ENCODE measurements at regions of chr20 and their contacts with region 1.

Region 1: GRCh38 chr20:36645998-36646397 is at the start of gene SLA2:
- DNase-seq: peak; percentile 83
- H3K4me3 Mint-ChIP-seq: peak within 1 kb of the TSS; percentile 97
- H3K27ac Mint-ChIP-seq: peak within 1 kb of the TSS; percentile 98
- H3K4me1 Mint-ChIP-seq: peaks cover 45% of the 10 kb centered on the region
- H3K27me3 Mint-ChIP-seq: no peaks in the 10 kb centered on the region
- total RNA-seq, gene SLA2: 44.1 TPM

Region 2: DNA sequence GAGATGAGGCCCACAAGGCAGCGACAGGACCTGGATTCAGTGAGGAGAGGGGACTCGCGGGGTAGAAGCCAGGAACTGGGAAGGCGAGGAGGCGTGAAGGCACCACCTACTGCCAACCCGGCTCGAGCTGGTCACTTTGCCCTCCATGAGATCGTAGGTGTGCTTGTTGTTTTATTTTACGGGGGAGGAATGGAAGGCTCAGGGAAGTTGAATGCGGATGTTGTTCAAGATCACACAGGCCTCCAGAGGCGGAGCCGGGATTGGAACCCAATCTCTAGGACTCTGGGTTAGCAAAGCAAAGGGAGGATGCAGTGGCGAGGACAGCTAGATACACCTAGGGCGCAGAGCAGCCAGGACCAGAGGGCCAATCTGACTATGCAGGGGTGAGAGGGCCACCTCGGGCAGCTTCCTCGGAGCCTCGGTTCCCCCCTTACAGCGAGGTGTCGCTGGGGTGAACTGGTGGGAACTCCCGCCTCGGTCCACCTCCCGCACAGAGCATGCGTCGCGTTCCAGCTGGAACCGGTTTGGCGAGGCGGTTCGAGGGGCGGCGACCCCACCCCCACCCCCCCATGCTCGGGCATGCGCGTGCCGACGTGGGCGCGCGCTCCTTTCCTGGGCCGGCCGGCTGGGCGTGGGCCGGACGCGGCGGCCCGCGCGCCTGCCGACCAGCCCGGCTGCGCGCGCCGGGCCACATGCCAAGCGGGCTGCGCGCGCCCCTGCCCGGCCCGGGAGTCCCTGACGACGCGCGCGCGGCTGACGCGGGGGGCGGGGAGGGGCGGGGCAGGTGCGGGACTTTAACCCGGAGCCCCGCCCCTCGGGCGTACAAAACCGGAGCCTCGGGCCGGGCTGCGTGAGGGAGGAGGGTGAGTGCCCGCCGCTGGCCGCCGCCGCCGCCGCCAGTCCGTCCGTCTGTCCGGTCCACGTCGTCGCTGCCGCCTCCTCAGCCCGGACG is 185.1 kb before region 1 on chr20:
- CTCF ChIA-PET with region 1: interaction called, 3 read pairs
- intact Hi-C with region 1: loop called (anchors 5 kb)
- DNase-seq: peak; percentile 89
- H3K4me3 Mint-ChIP-seq: peak overlapping the region; percentile 74
- H3K27ac Mint-ChIP-seq: peak overlapping the region; percentile 52
- H3K4me1 Mint-ChIP-seq: peaks cover 47% of the 10 kb centered on the region
- H3K27me3 Mint-ChIP-seq: no peaks in the 10 kb centered on the region

Region 3: DNA sequence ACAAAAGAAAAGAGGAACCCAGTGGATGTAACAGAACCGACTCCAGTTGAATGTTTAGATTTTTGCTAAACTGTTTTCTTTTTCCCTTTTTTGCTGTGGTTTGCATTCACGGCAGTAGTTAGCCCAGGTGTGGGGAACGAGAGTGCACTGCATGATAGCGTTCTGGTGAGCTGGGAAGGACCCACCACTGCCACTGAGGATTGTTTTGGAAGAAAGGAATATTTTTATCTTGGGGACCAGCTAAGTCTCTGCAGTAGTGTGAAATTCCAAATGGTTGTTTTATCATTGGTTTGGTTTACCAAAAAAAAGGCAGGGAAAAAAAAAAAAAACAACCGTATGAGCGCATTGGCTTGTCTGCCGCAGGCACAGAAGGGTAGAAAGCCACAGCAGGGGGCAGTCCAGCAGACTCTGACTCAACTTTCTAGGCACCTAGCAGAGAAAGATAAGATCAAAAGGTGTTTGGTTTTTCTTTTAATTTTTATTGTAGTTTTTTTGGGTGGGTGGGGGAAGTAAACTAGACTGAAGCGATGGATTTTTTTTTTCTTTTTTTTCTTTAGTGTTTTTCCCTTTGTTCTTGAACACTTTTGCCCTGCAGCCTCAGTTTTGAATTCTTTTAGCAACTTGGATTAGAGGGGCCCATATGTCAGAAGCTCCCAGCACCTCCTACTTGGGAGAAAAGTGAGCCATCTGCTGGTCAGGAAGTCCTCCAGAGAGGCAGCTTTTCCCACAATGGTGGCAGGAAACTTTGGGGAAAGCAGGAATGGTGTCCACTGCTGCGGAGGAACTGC is 54.0 kb before region 1 on chr20:
- CTCF ChIA-PET with region 1: no interaction called
- intact Hi-C with region 1: loop called (anchors 1 kb)
- DNase-seq: peak; percentile 76
- H3K4me3 Mint-ChIP-seq: no peak overlapping the region
- H3K27ac Mint-ChIP-seq: peak overlapping the region; percentile 75
- H3K4me1 Mint-ChIP-seq: peaks cover 56% of the 10 kb centered on the region
- H3K27me3 Mint-ChIP-seq: no peaks in the 10 kb centered on the region

Region 4: GRCh38 chr20:36613974-36614373 is 32.0 kb before region 1 on chr20:
- CTCF ChIA-PET with region 1: interaction called, 7 read pairs
- intact Hi-C with region 1: loop called (anchors 2 kb)
- DNase-seq: no peak
- H3K4me3 Mint-ChIP-seq: no peak overlapping the region
- H3K27ac Mint-ChIP-seq: peak overlapping the region; percentile 53
- H3K4me1 Mint-ChIP-seq: peaks cover 9% of the 10 kb centered on the region
- H3K27me3 Mint-ChIP-seq: no peaks in the 10 kb centered on the region

Region 5: DNA sequence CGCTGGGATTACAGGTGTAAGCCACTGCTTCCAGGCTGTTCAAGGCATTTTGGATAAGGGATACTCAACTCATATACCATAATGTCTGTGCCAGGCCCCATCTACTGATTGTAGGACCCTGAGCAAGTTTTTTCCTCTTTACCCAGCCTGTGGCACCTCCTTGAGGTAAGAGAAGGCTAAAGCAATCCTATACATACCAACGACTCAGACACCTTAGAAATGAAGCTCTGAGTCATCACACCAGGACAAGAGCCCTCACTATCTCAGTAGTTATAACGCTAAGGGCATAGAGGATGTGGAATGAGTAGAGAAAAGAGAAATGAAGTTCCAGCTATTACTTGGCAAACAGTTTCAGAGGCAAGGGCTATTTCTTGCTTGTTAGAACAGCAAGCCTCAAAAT is 83.0 kb after region 1 on chr20:
- CTCF ChIA-PET with region 1: interaction called, 4 read pairs
- intact Hi-C with region 1: loop called (anchors 5 kb)
- DNase-seq: peak; percentile 10
- H3K4me3 Mint-ChIP-seq: no peak overlapping the region
- H3K27ac Mint-ChIP-seq: no peak overlapping the region
- H3K4me1 Mint-ChIP-seq: peaks cover 19% of the 10 kb centered on the region
- H3K27me3 Mint-ChIP-seq: no peaks in the 10 kb centered on the region

Region 6: GRCh38 chr20:36773597-36774390 is 127.8 kb after region 1 on chr20 and contains the start of gene DSN1:
- CTCF ChIA-PET with region 1: interaction called, 4 read pairs
- intact Hi-C with region 1: loop called (anchors 1 kb)
- DNase-seq: peak; percentile 98
- H3K4me3 Mint-ChIP-seq: peak within 1 kb of the TSS; percentile 97
- H3K27ac Mint-ChIP-seq: peak within 1 kb of the TSS; percentile 97
- H3K4me1 Mint-ChIP-seq: peaks cover 21% of the 10 kb centered on the region
- H3K27me3 Mint-ChIP-seq: no peaks in the 10 kb centered on the region
- total RNA-seq, gene DSN1: 23.0 to 24.7 TPM